GM12878 (cell line): ENCODE measurements at regions of chr14 and their contacts with region 1.

Region 1: DNA sequence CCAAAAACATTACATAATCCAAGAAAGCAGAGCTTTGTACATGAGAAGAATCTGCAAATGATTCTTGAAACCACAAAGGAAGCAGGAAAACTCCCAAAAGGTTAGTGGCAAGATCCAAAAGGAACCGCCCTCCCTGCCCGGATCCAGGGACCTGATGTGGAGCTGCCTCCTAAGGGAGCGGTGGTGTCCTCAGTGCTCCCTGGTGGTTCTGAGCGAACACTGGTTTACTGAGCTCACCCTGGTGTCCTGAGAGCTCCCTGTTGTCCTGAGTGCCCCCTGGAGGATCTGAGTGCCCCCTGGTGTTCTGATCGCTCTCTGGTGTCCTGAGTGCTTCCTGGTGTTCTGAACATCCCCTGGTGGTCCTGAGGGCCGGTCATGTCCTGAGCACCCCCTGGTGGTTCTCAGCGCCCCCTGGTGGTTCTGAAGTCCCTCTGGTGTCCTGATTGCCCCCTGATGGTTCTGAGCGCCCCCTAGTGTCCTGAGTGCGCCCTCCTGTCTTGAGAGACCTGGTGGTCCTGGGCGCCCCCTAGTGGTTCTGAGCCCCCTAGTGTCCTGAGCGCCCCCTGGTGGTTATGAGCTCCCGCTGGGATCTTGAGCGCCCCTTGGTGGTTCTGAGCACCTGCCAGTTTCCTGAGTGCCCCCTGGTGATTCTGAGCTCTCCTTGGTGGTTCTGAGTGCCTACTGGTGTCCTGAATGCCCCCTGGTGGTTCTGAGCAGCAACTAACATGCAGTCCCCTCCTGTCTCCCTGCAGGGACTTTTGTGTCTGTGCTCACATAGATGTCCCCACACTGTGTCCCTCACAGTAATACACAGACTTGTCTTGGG is 891.1 kb downstream of the TMEM121 start:
- DNase-seq: peak; percentile 72
- ATAC-seq: peak; percentile 99
- H3K4me3 ChIP-seq: no peak overlapping the region
- H3K27ac ChIP-seq: no peak overlapping the region
- H3K4me1 ChIP-seq: no peaks in the 10 kb centered on the region
- H3K27me3 ChIP-seq: no peaks in the 10 kb centered on the region; a peak in 1 of 4 replicates
- CTCF ChIP-seq: peak; percentile 99 to 100 (median 100)
- EP300 ChIP-seq: no peak
- POLR2A ChIP-seq: no peak
- RAD21 ChIP-seq: peak; percentile 49; the same call in 1 of the 2 replicates

Region 2: GRCh38 chr14:105646175-105646574 is 771.3 kb before region 1 on chr14:
- CTCF ChIA-PET with region 1: no interaction called
- POLR2A ChIA-PET with region 1: no interaction called
- RAD21 ChIA-PET with region 1: no interaction called
- SMC1A ChIA-PET with region 1: no interaction called
- in situ Hi-C with region 1: no loop called
- intact Hi-C with region 1: no loop called
- DNase-seq: no peak
- ATAC-seq: no peak; the same call in 1 of the 3 replicates
- H3K4me3 ChIP-seq: no peak overlapping the region
- H3K27ac ChIP-seq: no peak overlapping the region
- H3K4me1 ChIP-seq: peaks cover 9% of the 10 kb centered on the region
- H3K27me3 ChIP-seq: no peaks in the 10 kb centered on the region; a peak in 2 of 4 replicates
- CTCF ChIP-seq: no peak
- EP300 ChIP-seq: no peak
- POLR2A ChIP-seq: no peak
- RAD21 ChIP-seq: no peak

Region 3: GRCh38 chr14:106235356-106236159 is 181.9 kb before region 1 on chr14:
- CTCF ChIA-PET with region 1: no interaction called
- POLR2A ChIA-PET with region 1: no interaction called
- RAD21 ChIA-PET with region 1: no interaction called
- SMC1A ChIA-PET with region 1: no interaction called
- in situ Hi-C with region 1: no loop called
- intact Hi-C with region 1: no loop called
- DNase-seq: no peak
- ATAC-seq: no peak
- H3K4me3 ChIP-seq: 0 out of 2 replicates have a peak overlapping the region, but pooled peaks have one; percentile 48
- H3K27ac ChIP-seq: peak overlapping the region; percentile 48; the same call in 1 of the 2 replicates
- H3K4me1 ChIP-seq: no peaks in the 10 kb centered on the region; the same call in 1 of the 2 replicates
- H3K27me3 ChIP-seq: no peaks in the 10 kb centered on the region
- CTCF ChIP-seq: no peak
- EP300 ChIP-seq: no peak
- POLR2A ChIP-seq: peak; percentile 80
- RAD21 ChIP-seq: no peak

Region 4: DNA sequence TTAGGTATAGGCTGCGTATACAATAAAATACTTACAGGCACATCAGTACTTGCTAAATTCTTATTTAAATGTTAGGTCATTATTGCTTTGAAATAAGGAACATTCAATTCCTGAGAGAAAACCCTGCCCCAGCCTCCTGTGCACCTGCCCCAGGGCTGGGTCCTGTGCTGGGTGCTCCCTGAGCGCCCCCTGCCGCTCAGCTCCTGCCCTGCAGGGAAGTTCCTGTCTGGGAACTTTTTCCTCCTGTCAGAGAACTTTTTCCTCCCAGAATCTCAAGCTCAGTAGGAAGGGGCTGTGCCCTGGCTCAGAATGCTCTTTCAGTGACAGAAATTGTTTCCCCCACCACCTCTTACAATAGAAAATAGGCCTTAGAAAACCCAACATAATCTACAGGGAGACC is 139.9 kb before region 1 on chr14:
- CTCF ChIA-PET with region 1: interaction called, 20 read pairs
- POLR2A ChIA-PET with region 1: no interaction called
- RAD21 ChIA-PET with region 1: no interaction called
- SMC1A ChIA-PET with region 1: interaction called, 4 read pairs
- in situ Hi-C with region 1: no loop called
- intact Hi-C with region 1: no loop called
- DNase-seq: no peak
- ATAC-seq: peak; percentile 81
- H3K4me3 ChIP-seq: no peak overlapping the region
- H3K27ac ChIP-seq: no peak overlapping the region
- H3K4me1 ChIP-seq: no peaks in the 10 kb centered on the region
- H3K27me3 ChIP-seq: peaks cover 0 to 3% of the 10 kb centered on the region in 2 experiments; a peak in 3 of 4 replicates
- CTCF ChIP-seq: peak; percentile 81 to 98 (median 94)
- EP300 ChIP-seq: no peak
- POLR2A ChIP-seq: no peak
- RAD21 ChIP-seq: peak; percentile 75

Region 5: GRCh38 chr14:106327234-106327633 is 90.2 kb before region 1 on chr14:
- CTCF ChIA-PET with region 1: interaction called, 11 read pairs
- POLR2A ChIA-PET with region 1: no interaction called
- RAD21 ChIA-PET with region 1: no interaction called
- SMC1A ChIA-PET with region 1: no interaction called
- in situ Hi-C with region 1: no loop called
- intact Hi-C with region 1: no loop called
- DNase-seq: no peak
- ATAC-seq: no peak
- H3K4me3 ChIP-seq: no peak overlapping the region
- H3K27ac ChIP-seq: no peak overlapping the region
- H3K4me1 ChIP-seq: no peaks in the 10 kb centered on the region
- H3K27me3 ChIP-seq: no peaks in the 10 kb centered on the region
- CTCF ChIP-seq: no peak
- EP300 ChIP-seq: no peak
- POLR2A ChIP-seq: no peak
- RAD21 ChIP-seq: no peak

Region 6: GRCh38 chr14:106442857-106443256 is 25.4 kb after region 1 on chr14:
- CTCF ChIA-PET with region 1: interaction called, 104 read pairs
- POLR2A ChIA-PET with region 1: no interaction called
- RAD21 ChIA-PET with region 1: no interaction called
- SMC1A ChIA-PET with region 1: interaction called, 4 read pairs
- in situ Hi-C with region 1: no loop called
- intact Hi-C with region 1: no loop called
- DNase-seq: no peak
- ATAC-seq: peak; percentile 100
- H3K4me3 ChIP-seq: no peak overlapping the region
- H3K27ac ChIP-seq: no peak overlapping the region
- H3K4me1 ChIP-seq: no peaks in the 10 kb centered on the region
- H3K27me3 ChIP-seq: peaks cover 0 to 6% of the 10 kb centered on the region in 2 experiments; a peak in 2 of 4 replicates
- CTCF ChIP-seq: peak; percentile 56 to 76 (median 57)
- EP300 ChIP-seq: no peak
- POLR2A ChIP-seq: no peak
- RAD21 ChIP-seq: peak; percentile 31; the same call in 1 of the 2 replicates

Region 7: DNA sequence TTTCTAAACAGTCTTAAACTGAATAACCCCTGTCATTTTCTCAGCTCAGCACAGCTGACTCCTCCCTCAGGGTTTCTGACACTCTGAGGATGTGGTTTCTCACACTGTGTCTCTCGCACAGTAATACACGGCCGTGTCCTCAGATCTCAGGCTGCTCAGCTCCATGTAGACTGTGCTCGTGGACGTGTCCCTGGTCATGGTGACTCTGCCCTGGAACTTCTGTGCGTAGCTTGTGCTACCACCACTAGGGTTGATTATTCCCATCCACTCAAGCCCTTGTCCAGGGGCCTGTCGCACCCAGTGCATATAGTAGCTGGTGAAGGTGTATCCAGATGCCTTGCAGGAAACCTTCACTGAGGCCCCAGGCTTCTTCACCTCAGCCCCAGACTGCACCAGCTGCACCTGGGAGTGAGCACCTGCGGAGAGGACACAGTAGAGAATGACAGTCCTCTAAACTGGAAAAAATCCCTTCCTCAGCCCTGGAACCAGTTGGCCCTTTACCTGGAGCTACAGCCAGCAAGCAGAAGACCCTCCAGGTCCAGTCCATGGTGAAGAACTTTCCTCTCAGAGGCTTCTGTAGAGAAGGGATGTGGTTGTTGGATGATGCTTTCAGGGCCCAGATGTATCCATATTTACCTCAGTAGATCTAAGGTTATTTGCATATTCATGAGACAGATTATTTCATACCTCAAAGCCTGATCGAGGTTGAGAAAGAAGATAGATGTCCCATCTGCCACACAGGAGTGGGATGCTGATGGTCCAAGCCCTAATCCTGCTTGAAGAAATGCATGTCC is 93.8 kb after region 1 on chr14:
- CTCF ChIA-PET with region 1: interaction called, 19 read pairs
- POLR2A ChIA-PET with region 1: no interaction called
- RAD21 ChIA-PET with region 1: interaction called, 3 read pairs
- SMC1A ChIA-PET with region 1: interaction called, 4 read pairs
- in situ Hi-C with region 1: no loop called
- intact Hi-C with region 1: no loop called
- DNase-seq: no peak
- ATAC-seq: peak; percentile 78
- H3K4me3 ChIP-seq: no peak overlapping the region
- H3K27ac ChIP-seq: no peak overlapping the region
- H3K4me1 ChIP-seq: no peaks in the 10 kb centered on the region
- H3K27me3 ChIP-seq: peaks cover 0 to 2% of the 10 kb centered on the region in 2 experiments; a peak in 2 of 4 replicates
- CTCF ChIP-seq: no peak
- EP300 ChIP-seq: no peak
- POLR2A ChIP-seq: no peak
- RAD21 ChIP-seq: no peak

Region 8: DNA sequence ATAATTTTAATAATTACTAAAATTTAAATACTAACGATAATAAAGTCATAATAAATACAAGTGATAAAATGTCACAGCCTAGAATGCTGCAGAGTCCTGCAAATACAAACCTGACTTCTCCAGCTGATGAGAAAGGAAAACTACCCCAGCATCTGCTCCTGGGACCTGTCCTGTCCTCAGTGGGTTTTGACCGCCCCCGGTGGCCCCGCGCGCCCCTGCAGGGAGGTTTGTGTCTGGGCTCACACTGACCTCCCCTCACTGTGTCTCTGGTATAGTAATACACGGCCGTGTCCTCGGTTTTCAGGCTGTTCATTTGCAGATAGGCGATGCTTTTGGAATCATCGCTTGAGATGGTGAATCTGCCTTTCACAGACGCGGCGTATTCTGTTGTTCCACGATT is 248.4 kb after region 1 on chr14:
- CTCF ChIA-PET with region 1: interaction called, 10 read pairs
- POLR2A ChIA-PET with region 1: no interaction called
- RAD21 ChIA-PET with region 1: interaction called, 3 read pairs
- SMC1A ChIA-PET with region 1: interaction called, 3 read pairs
- in situ Hi-C with region 1: no loop called
- intact Hi-C with region 1: no loop called
- DNase-seq: no peak
- ATAC-seq: no peak
- H3K4me3 ChIP-seq: no peak overlapping the region
- H3K27ac ChIP-seq: no peak overlapping the region
- H3K4me1 ChIP-seq: no peaks in the 10 kb centered on the region
- H3K27me3 ChIP-seq: peaks cover 0 to 3% of the 10 kb centered on the region in 2 experiments; a peak in 1 of 4 replicates
- CTCF ChIP-seq: no peak
- EP300 ChIP-seq: no peak
- POLR2A ChIP-seq: no peak
- RAD21 ChIP-seq: no peak